CD4-positive, alpha-beta T cell (primary cell): ENCODE measurements at regions of chr17 and their contacts with region 1.

Region 1: GRCh38 chr17:40026816-40027613 is 11.8 kb downstream of the CSF3 start:
- DNase-seq: peak; percentile 63 to 89 (median 71)
- ATAC-seq: peak; percentile 87
- H3K4me3 ChIP-seq: no peak overlapping the region
- H3K4me3 Mint-ChIP-seq: peak overlapping the region; percentile 23
- H3K27ac ChIP-seq: no peak overlapping the region
- H3K27ac Mint-ChIP-seq: peak overlapping the region; percentile 34
- H3K4me1 ChIP-seq: peaks cover 25% of the 10 kb centered on the region
- H3K4me1 Mint-ChIP-seq: peaks cover 23% of the 10 kb centered on the region
- H3K27me3 ChIP-seq: no peaks in the 10 kb centered on the region
- H3K27me3 Mint-ChIP-seq: no peaks in the 10 kb centered on the region
- CTCF ChIP-seq: peak; percentile 97

Region 2: GRCh38 chr17:39553341-39553945 is 473.6 kb before region 1 on chr17:
- CTCF ChIA-PET with region 1: no interaction called
- POLR2A ChIA-PET with region 1: no interaction called
- intact Hi-C with region 1: loop called in 1 of 2 experiments (anchors 10 kb)
- DNase-seq: no peak
- ATAC-seq: no peak
- H3K4me3 ChIP-seq: no peak overlapping the region
- H3K4me3 Mint-ChIP-seq: no peak overlapping the region
- H3K27ac ChIP-seq: no peak overlapping the region
- H3K27ac Mint-ChIP-seq: no peak overlapping the region
- H3K4me1 ChIP-seq: no peaks in the 10 kb centered on the region
- H3K4me1 Mint-ChIP-seq: no peaks in the 10 kb centered on the region
- H3K27me3 ChIP-seq: no peaks in the 10 kb centered on the region
- H3K27me3 Mint-ChIP-seq: no peaks in the 10 kb centered on the region
- CTCF ChIP-seq: no peak

Region 3: DNA sequence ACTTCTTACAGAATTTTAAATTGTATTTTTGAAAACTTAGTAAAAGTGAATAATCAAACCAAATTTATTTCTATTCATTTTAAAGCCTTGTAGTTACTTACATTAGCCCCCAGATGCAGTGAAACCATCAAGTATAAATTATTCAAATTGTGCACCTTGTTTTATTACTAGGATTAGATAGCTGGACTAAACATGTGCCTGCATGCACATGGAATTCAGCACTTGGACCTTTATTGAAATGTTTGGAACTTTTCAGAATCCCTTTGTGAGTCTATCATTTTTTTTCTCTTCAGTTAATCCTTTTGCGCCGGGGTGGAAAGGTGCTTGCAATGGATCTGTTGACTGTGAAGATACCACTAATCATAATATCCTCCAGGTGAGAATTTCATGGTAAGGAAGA is 154.3 kb before region 1 on chr17:
- CTCF ChIA-PET with region 1: no interaction called
- POLR2A ChIA-PET with region 1: no interaction called
- intact Hi-C with region 1: loop called (anchors 2 to 5 kb)
- DNase-seq: peak in 2 of 14 experiments; percentile 39 to 52
- ATAC-seq: peak; percentile 57
- H3K4me3 ChIP-seq: no peak overlapping the region
- H3K4me3 Mint-ChIP-seq: no peak overlapping the region
- H3K27ac ChIP-seq: no peak overlapping the region
- H3K27ac Mint-ChIP-seq: no peak overlapping the region
- H3K4me1 ChIP-seq: peaks cover 10% of the 10 kb centered on the region
- H3K4me1 Mint-ChIP-seq: peaks cover 9% of the 10 kb centered on the region
- H3K27me3 ChIP-seq: no peaks in the 10 kb centered on the region
- H3K27me3 Mint-ChIP-seq: no peaks in the 10 kb centered on the region
- CTCF ChIP-seq: peak; percentile 47

Region 4: DNA sequence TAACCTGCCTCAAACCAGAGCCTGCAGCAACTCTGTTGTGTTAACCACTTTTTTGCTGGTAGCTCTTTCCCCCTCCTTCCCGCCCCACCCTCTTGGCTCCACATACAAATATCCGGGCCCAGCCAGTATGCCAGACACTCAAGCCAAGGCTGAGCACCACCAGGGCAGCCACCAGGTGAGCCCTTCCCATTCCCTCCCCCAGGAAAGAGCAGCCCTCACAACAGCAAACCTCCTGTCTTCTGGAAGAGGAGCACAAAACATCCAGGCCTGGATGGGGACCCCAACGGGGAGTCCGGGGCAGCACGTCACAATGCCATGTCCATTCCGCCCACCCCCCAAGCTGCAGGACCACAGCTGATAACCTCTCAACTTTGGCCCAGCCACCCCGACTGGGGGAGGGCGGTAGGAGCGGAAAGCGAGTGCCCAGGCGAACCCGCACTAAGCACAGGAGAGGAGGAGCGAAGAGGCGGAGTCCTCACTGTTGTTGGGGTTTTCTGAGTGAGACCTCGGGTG is 100.4 kb before region 1 on chr17:
- CTCF ChIA-PET with region 1: no interaction called
- POLR2A ChIA-PET with region 1: no interaction called
- intact Hi-C with region 1: no loop called
- DNase-seq: peak; percentile 47 to 88 (median 56)
- ATAC-seq: peak; percentile 68
- H3K4me3 ChIP-seq: peak overlapping the region; percentile 89
- H3K4me3 Mint-ChIP-seq: peak overlapping the region; percentile 92
- H3K27ac ChIP-seq: peak overlapping the region; percentile 63 to 90
- H3K27ac Mint-ChIP-seq: peak overlapping the region; percentile 93
- H3K4me1 ChIP-seq: peaks cover 62% of the 10 kb centered on the region
- H3K4me1 Mint-ChIP-seq: peaks cover 60% of the 10 kb centered on the region
- H3K27me3 ChIP-seq: no peaks in the 10 kb centered on the region
- H3K27me3 Mint-ChIP-seq: no peaks in the 10 kb centered on the region
- CTCF ChIP-seq: no peak

Region 5: GRCh38 chr17:39972271-39972670 is 54.7 kb before region 1 on chr17:
- CTCF ChIA-PET with region 1: no interaction called
- POLR2A ChIA-PET with region 1: no interaction called
- intact Hi-C with region 1: no loop called
- DNase-seq: peak in 1 of 14 experiments; percentile 30
- ATAC-seq: no peak
- H3K4me3 ChIP-seq: no peak overlapping the region
- H3K4me3 Mint-ChIP-seq: no peak overlapping the region
- H3K27ac ChIP-seq: no peak overlapping the region
- H3K27ac Mint-ChIP-seq: no peak overlapping the region
- H3K4me1 ChIP-seq: peaks cover 3% of the 10 kb centered on the region
- H3K4me1 Mint-ChIP-seq: no peaks in the 10 kb centered on the region
- H3K27me3 ChIP-seq: peaks cover 0 to 2% of the 10 kb centered on the region in 2 experiments
- H3K27me3 Mint-ChIP-seq: peaks cover 40% of the 10 kb centered on the region
- CTCF ChIP-seq: no peak